Endothelial cell of umbilical vein (primary cell): ENCODE measurements at regions of chr1 and their contacts with region 1.

Region 1: GRCh38 chr1:159780583-159781582 is at the start of gene DUSP23:
- DNase-seq: peak; percentile 100
- H3K4me3 ChIP-seq: peak within 1 kb of the TSS; percentile 35 to 80 (median 62)
- H3K27ac ChIP-seq: peak within 1 kb of the TSS; percentile 92
- H3K4me1 ChIP-seq: peaks cover 46% of the 10 kb centered on the region
- H3K27me3 ChIP-seq: no peaks in the 10 kb centered on the region
- CTCF ChIP-seq: peak; percentile 90 to 97
- POLR2A ChIP-seq: peak; percentile 10
- total RNA-seq, gene DUSP23: 82.5 and 126 TPM in 2 replicates

Region 2: GRCh38 chr1:159161001-159161718 is 619.7 kb before region 1 on chr1:
- CTCF ChIA-PET with region 1: interaction called, 24 read pairs
- POLR2A ChIA-PET with region 1: no interaction called
- dilution Hi-C with region 1: no loop called
- intact Hi-C with region 1: loop called (anchors 1 kb)
- DNase-seq: peak; percentile 86
- H3K4me3 ChIP-seq: no peak overlapping the region
- H3K27ac ChIP-seq: no peak overlapping the region
- H3K4me1 ChIP-seq: peaks cover 7% of the 10 kb centered on the region
- H3K27me3 ChIP-seq: peaks cover 5 to 10% of the 10 kb centered on the region in 2 experiments
- CTCF ChIP-seq: peak; percentile 96 to 99
- POLR2A ChIP-seq: peak; percentile 25

Region 3: GRCh38 chr1:159408862-159409400 is 372.0 kb before region 1 on chr1:
- CTCF ChIA-PET with region 1: interaction called, 4 read pairs
- POLR2A ChIA-PET with region 1: no interaction called
- dilution Hi-C with region 1: no loop called
- intact Hi-C with region 1: loop called (anchors 2 kb)
- DNase-seq: peak; percentile 98
- H3K4me3 ChIP-seq: peak overlapping the region in 1 of 3 experiments; percentile 39
- H3K27ac ChIP-seq: peak overlapping the region; percentile 90
- H3K4me1 ChIP-seq: peaks cover 10% of the 10 kb centered on the region
- H3K27me3 ChIP-seq: no peaks in the 10 kb centered on the region
- CTCF ChIP-seq: no peak
- POLR2A ChIP-seq: no peak

Region 4: GRCh38 chr1:159492575-159493323 is 288.1 kb before region 1 on chr1:
- CTCF ChIA-PET with region 1: interaction called, 3 read pairs
- POLR2A ChIA-PET with region 1: no interaction called
- dilution Hi-C with region 1: loop called (anchors 25 kb)
- intact Hi-C with region 1: loop called (anchors 5 kb)
- DNase-seq: peak; percentile 65
- H3K4me3 ChIP-seq: no peak overlapping the region
- H3K27ac ChIP-seq: peak overlapping the region; percentile 84
- H3K4me1 ChIP-seq: peaks cover 13% of the 10 kb centered on the region
- H3K27me3 ChIP-seq: no peaks in the 10 kb centered on the region
- CTCF ChIP-seq: no peak
- POLR2A ChIP-seq: peak; percentile 31

Region 5: GRCh38 chr1:159653201-159653600 is 127.7 kb before region 1 on chr1:
- CTCF ChIA-PET with region 1: interaction called, 4 read pairs
- POLR2A ChIA-PET with region 1: no interaction called
- dilution Hi-C with region 1: no loop called
- intact Hi-C with region 1: loop called (anchors 1 kb)
- DNase-seq: peak; percentile 88
- H3K4me3 ChIP-seq: no peak overlapping the region
- H3K27ac ChIP-seq: peak overlapping the region; percentile 93
- H3K4me1 ChIP-seq: peaks cover 29% of the 10 kb centered on the region
- H3K27me3 ChIP-seq: no peaks in the 10 kb centered on the region
- CTCF ChIP-seq: no peak
- POLR2A ChIP-seq: no peak

Region 6: GRCh38 chr1:159763686-159764085 is 17.2 kb before region 1 on chr1:
- CTCF ChIA-PET with region 1: no interaction called
- POLR2A ChIA-PET with region 1: no interaction called
- dilution Hi-C with region 1: no loop called
- intact Hi-C with region 1: no loop called
- DNase-seq: no peak
- H3K4me3 ChIP-seq: no peak overlapping the region
- H3K27ac ChIP-seq: no peak overlapping the region
- H3K4me1 ChIP-seq: no peaks in the 10 kb centered on the region
- H3K27me3 ChIP-seq: no peaks in the 10 kb centered on the region
- CTCF ChIP-seq: no peak
- POLR2A ChIP-seq: no peak

Region 7: DNA sequence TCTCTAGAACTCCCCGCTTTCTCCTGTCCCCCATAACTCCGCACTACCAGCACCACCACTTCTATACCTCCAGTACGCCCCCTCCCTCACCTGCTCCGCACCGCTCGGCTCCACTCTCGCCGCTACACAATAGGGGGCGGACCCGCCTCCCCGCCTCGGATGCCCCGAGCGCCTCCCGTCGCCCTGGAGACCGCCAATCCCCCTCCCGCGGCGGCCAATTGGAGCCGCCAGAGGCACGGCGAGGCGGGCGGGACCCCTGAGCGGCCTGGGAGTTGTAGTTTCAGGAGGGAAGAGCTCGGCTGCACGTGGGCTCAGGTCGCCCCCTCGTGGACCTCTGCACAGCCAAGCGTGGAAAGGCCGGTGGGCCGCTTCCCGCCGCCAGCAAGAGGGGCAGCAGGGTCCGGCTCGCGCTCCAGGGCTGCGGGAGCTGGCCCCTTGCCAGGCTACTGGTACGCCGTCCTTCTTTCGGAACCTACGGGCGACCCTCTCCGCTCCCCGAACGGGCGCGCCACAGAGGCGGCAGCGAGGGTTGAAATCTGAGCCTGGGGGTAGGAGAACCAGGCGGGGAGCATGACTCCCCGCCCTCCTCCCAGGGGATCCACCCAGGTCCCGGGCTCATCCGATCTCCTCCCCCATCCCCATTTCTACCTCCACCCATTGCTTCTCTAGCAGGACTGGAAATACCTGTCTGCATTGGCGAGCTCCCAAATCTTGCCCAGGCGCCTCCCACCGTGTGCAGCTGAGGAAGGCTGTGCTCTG is 164.8 kb after region 1 on chr1 and contains the start of gene IGSF9:
- CTCF ChIA-PET with region 1: interaction called, 4 read pairs
- POLR2A ChIA-PET with region 1: no interaction called
- dilution Hi-C with region 1: no loop called
- intact Hi-C with region 1: loop called (anchors 1 kb)
- DNase-seq: peak; percentile 85
- H3K4me3 ChIP-seq: peak within 1 kb of the TSS in 2 of 3 experiments; percentile 15 to 16
- H3K27ac ChIP-seq: no peak within 1 kb of the TSS
- H3K4me1 ChIP-seq: peaks cover 5% of the 10 kb centered on the region
- H3K27me3 ChIP-seq: peaks cover 22 to 36% of the 10 kb centered on the region in 2 experiments
- CTCF ChIP-seq: peak; percentile 47 to 72
- POLR2A ChIP-seq: no peak
- total RNA-seq, gene IGSF9: 0.15 and 0.16 TPM in 2 replicates